ENCODE measurements at regions of chr19 and their contacts with region 1.

Region 1: DNA sequence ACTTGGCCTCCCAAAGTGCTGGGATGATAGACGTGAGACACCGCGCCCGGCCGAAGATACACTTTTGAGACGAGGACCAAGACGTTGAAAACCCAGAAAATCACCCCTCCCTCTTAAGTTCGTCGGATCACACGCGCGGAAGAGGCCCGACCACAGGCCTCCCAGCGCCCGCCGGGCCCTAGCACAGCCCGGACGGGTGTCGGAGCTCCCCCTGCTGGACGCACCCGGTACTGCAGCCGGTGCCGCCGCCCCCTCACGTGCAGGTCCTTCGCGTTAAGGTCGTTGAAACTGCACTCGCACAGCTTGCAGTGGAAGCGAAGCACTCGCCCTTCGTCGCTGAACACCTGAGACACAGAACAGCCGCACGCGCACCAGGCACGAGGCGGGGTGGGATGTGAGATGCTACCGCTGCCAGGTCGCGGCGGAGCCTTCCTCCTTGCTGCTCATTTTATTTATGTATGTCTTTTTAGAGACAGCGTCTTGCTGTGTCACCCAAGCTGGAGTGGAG is 35.7 kb upstream of the MATK start:
- DNase-seq: peak; percentile 97
- H3K4me3 Mint-ChIP-seq: peak overlapping the region; percentile 28
- H3K27ac Mint-ChIP-seq: peak overlapping the region; percentile 74
- H3K4me1 Mint-ChIP-seq: peaks cover 17% of the 10 kb centered on the region
- H3K27me3 Mint-ChIP-seq: peaks cover 1% of the 10 kb centered on the region

Region 2: GRCh38 chr19:3665681-3666544 is 156.0 kb before region 1 on chr19:
- intact Hi-C with region 1: no loop called
- DNase-seq: peak; percentile 94
- H3K4me3 Mint-ChIP-seq: no peak overlapping the region
- H3K27ac Mint-ChIP-seq: no peak overlapping the region
- H3K4me1 Mint-ChIP-seq: no peaks in the 10 kb centered on the region
- H3K27me3 Mint-ChIP-seq: no peaks in the 10 kb centered on the region

Region 3: DNA sequence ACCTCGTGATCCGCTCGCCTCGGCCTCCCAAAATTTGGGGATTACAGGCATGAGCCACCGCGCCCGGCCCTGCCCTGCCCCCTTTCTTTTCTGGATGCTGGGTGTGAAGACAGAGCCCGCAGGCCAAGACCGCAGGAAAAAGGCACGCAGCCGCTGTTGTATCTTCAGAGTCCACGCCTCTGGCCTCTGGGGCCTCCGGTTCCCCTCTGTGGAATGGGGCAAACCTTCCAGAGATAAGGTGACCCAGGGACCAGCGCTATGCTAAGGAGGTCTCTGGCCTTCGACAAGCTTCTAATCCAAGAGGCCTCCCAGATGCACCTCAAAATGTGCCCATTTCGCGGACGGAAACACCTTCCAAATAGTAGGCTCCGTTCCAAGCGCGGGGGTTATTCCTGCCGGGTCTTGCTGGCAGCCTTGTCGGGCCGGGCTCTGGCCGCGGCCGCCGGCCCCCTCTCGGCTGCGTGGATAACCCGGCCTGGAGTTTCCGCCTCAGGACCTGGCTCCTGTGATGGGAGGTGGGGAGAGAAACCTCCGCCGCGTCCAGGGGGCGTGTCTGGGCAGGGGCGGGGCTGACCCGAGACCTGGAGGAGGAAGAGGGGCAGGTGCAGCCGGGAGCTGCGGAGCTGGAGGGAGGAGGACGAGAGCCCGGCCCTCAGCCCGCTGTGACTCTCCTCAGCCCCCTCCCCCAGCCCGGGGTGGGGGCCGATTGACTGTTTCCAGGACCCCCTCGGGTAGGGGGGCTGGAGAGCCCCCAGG is 100.6 kb before region 1 on chr19:
- intact Hi-C with region 1: loop called (anchors 5 kb)
- DNase-seq: peak; percentile 96
- H3K4me3 Mint-ChIP-seq: peak overlapping the region; percentile 54
- H3K27ac Mint-ChIP-seq: no peak overlapping the region
- H3K4me1 Mint-ChIP-seq: peaks cover 4% of the 10 kb centered on the region
- H3K27me3 Mint-ChIP-seq: peaks cover 32% of the 10 kb centered on the region

Region 4: DNA sequence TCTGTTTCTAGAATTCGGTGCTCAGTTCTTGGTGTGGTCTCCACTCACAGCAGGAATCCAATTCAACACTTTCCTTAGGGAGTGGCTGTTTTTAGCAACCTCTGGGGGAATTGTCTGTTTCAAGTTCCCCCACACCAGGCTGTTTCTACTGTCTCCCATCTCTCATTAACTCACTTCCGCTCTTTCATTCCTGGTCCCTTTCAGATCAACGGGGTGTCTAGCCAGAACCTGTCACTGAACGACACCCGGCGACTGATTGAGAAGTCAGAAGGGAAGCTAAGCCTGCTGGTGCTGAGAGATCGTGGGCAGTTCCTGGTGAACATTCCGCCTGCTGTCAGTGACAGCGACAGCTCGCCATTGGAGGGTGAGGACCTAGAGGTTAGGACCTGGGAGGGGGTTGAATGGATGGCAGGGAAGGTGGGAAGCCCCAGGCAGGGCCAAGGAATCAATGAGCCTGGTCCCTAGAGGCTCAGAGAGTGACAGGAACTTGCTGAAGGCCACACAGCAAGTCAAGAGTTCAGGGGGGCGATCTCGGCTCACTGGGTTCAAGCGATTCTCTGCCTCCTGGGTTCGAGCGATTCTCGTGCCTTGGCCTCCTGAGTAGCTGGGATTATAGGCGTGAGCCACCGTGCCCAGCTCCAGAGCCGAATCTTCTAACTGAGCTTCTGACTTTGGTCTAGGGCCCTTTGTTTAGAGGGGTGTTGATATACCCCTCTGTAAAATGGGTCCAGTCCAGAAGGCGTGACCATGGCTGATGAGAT is 88.2 kb before region 1 on chr19:
- intact Hi-C with region 1: no loop called
- DNase-seq: no peak
- H3K4me3 Mint-ChIP-seq: no peak overlapping the region
- H3K27ac Mint-ChIP-seq: no peak overlapping the region
- H3K4me1 Mint-ChIP-seq: peaks cover 3% of the 10 kb centered on the region
- H3K27me3 Mint-ChIP-seq: no peaks in the 10 kb centered on the region

Region 5: DNA sequence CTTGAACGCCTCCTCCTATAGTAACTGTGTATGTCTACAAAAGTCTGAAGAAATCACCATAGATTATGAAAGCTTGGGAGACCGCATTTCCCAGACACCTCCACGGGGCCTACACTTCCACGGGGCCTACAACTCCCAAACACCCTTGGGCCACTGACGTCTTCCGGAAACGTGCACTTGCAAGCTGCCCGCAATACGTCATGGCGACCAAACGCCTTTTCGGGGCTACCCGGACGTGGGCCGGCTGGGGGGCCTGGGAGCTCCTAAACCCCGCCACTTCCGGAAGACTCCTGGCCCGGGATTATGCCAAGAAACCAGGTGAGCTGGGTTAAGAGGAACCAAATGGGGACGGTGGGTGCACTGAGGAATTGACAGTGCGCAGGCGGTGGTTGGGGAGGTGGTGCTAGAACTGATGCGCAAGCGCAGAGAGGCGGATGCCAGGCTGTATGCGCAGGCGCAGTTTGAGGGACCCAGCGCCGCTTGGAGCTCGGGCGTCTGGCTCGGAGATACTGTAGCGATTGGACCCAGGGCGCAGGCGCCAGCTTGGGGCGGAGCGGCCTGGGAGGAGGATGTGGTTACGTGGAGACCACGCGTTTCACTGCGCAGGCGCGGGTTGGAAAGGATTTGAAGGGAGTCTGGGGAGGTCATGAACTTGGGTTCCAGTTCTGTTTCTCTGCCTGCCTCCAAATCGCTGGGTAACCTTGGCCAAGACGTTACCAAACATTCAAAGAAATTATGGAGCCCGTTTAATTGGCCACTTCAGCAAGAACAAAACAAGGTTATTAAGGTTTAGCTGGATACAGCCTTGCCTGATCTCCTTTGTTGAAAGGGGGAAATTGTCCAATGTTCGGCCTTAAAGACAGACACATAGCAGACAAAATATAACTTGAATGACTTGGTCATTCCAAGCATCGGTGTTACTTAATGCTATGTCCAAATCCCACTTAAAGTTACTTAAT is 59.1 kb before region 1 on chr19 and contains the start of gene MRPL54:
- intact Hi-C with region 1: loop called (anchors 1 kb)
- DNase-seq: peak; percentile 100
- H3K4me3 Mint-ChIP-seq: peak within 1 kb of the TSS; percentile 99
- H3K27ac Mint-ChIP-seq: peak within 1 kb of the TSS; percentile 100
- H3K4me1 Mint-ChIP-seq: peaks cover 32% of the 10 kb centered on the region
- H3K27me3 Mint-ChIP-seq: peaks cover 5% of the 10 kb centered on the region
- total RNA-seq, gene MRPL54: 91.4 and 96.6 TPM in 2 replicates

Region 6: DNA sequence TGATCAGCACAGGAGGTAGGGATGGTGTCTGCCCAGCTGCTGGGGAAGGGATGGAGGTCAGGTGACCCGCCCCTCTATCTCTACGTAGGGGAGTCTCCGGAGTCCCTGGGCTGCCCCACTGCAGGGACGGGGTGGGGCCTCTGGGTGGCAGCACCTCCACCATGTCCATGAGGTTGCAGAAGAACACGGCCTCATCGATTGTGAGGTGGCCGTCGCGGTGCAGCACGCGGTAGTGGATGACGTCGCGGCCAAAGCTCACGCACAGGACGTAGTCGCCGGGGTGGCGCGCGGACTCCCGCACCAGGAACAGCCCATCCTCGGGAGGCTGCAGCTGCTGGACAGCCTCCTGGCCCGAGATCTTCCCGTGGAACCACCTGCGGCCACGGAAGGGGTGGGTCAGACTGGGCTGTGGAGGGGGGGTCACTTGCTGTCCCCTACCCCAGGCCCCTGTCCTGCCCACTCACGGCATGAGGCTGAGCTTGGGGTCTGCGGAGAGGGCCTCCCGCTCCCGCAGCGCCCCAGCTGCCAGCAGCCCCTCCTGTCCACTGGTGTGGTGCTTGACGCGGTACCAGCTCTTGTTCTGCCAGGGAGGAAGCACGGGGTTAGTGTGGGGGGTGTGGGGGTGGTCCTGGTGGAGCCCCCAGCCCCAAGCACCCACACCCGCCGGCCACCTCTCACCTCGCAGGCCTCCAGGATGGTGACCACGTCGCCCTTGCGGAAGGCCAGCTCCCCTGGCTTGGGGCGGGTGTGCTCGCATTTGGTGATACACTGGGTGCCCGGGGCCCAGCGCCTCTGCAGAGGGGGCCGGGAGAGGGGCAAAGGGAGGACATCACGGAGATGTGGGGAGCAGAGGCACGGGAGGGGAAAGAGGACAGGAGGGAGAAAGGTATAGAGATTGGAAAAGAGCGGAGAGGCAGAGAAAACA is 38.0 kb before region 1 on chr19:
- intact Hi-C with region 1: loop called (anchors 2 kb)
- DNase-seq: peak; percentile 70
- H3K4me3 Mint-ChIP-seq: peak overlapping the region; percentile 84
- H3K27ac Mint-ChIP-seq: no peak overlapping the region
- H3K4me1 Mint-ChIP-seq: peaks cover 4% of the 10 kb centered on the region
- H3K27me3 Mint-ChIP-seq: peaks cover 7% of the 10 kb centered on the region

Region 7: DNA sequence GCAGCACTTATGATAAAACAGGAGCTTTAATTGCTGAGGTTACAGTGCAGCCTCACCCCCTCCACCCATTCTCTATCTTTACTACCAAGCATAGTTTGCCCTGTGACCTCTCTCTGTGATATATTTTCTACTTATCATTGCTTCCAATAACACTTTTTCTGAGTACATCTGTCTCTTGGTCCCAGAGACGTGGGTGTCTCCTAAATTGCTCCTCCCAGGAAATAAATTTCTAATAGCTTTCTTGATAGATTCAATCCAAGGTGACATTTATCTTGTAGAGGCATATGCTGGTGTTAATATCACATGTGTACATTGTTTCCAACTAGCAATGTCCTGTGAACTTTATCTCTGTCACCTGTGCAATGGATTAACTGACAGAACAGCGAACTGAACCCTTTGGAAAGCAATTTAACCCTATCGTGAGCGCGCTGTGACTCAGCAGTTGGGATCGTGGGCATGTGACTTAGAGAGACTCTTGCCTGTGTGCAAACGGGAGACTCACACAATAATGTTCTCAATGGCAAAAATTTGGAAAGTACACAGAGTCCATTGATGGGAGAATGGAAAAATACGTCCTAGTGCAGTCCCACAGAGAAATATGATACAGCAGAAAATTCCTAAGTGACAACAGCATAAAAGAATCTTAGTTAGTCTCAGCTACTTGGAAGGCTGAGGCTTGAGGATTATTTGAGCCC is 309.0 kb after region 1 on chr19:
- intact Hi-C with region 1: no loop called
- DNase-seq: no peak
- H3K4me3 Mint-ChIP-seq: no peak overlapping the region
- H3K27ac Mint-ChIP-seq: no peak overlapping the region
- H3K4me1 Mint-ChIP-seq: peaks cover 3% of the 10 kb centered on the region
- H3K27me3 Mint-ChIP-seq: peaks cover 2% of the 10 kb centered on the region

Measured in activated CD4-positive, alpha-beta T cell treated with anti-CD3 and anti-CD28 coated beads, Interleukin-2, amount 10 ng/mL, durations not matched to agents 24 days and 14 days (primary cell).